ENCODE measurements at regions of chr11 and their contacts with region 1.

Region 1: DNA sequence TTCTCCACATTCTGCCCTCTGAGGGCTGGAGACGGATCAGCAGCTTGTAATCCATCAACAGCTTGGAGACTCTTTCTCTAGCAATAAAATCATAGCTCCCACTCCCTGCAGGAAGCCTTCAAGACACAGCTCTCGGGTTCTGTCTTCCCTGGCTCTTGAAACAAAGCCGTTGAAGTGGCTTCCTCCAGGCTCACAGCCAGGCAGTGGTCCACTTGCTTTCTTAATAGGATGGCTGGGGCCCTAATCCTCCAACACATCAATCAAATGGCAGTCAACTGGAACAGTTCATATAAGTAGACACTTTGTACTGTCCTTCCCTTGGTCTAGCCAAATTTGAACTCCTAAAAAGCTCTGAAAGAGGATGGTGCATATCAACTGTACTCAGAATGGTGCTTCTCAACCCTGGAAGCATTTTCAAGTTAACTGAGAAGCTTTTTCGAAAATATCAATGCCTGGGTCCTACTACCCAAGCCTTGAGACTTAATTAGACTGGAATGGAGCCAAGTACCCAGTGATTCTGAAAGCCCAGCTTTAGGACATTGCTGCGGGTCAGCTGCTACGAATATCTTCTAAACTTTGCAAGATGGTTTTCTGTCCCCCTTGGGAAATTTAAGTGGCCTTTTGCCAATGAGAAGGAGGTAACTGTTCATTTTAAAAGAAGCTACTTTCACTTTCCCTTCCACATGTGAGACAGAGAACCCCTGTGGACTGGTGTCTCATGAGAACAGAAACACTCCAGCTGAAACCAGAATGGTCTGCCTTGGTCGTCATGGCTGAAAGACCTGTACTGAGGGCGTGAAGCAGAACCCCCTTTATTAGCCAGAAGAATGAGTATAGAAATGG is 74.7 kb downstream of the SC5D start:
- DNase-seq: peak; percentile 99
- ATAC-seq: peak; percentile 96
- H3K4me3 ChIP-seq: 0 out of 2 replicates have a peak overlapping the region, but pooled peaks have one; percentile 24
- H3K27ac ChIP-seq: peak overlapping the region; percentile 85
- H3K4me1 ChIP-seq: peaks cover 43% of the 10 kb centered on the region
- H3K27me3 ChIP-seq: no peaks in the 10 kb centered on the region
- CTCF ChIP-seq: no peak
- EP300 ChIP-seq: peak in 1 of 2 experiments; percentile 42; a peak in 1 of 4 replicates
- POLR2A ChIP-seq: no peak
- RAD21 ChIP-seq: no peak

Region 2: GRCh38 chr11:121270001-121270678 is 97.1 kb before region 1 on chr11:
- CTCF ChIA-PET with region 1: no interaction called
- POLR2A ChIA-PET with region 1: no interaction called
- RAD21 ChIA-PET with region 1: no interaction called
- SMC1A ChIA-PET with region 1: no interaction called
- in situ Hi-C with region 1: no loop called
- intact Hi-C with region 1: no loop called
- DNase-seq: no peak
- ATAC-seq: no peak
- H3K4me3 ChIP-seq: no peak overlapping the region
- H3K27ac ChIP-seq: no peak overlapping the region
- H3K4me1 ChIP-seq: no peaks in the 10 kb centered on the region; the same call in 1 of the 2 replicates
- H3K27me3 ChIP-seq: peaks cover 1 to 7% of the 10 kb centered on the region in 2 experiments; a peak in 2 of 4 replicates
- CTCF ChIP-seq: no peak
- EP300 ChIP-seq: no peak
- POLR2A ChIP-seq: no peak
- RAD21 ChIP-seq: no peak

Region 3: GRCh38 chr11:121328967-121329679 is 38.1 kb before region 1 on chr11:
- CTCF ChIA-PET with region 1: interaction called, 10 read pairs
- POLR2A ChIA-PET with region 1: interaction called, 3 read pairs
- RAD21 ChIA-PET with region 1: interaction called, 15 read pairs
- SMC1A ChIA-PET with region 1: interaction called, 338 read pairs
- in situ Hi-C with region 1: no loop called
- intact Hi-C with region 1: loop called (anchors 5 kb)
- DNase-seq: no peak
- ATAC-seq: peak; percentile 68
- H3K4me3 ChIP-seq: no peak overlapping the region
- H3K27ac ChIP-seq: peak overlapping the region; percentile 13; the same call in 1 of the 2 replicates
- H3K4me1 ChIP-seq: peaks cover 18% of the 10 kb centered on the region
- H3K27me3 ChIP-seq: no peaks in the 10 kb centered on the region
- CTCF ChIP-seq: no peak
- EP300 ChIP-seq: no peak
- POLR2A ChIP-seq: no peak
- RAD21 ChIP-seq: no peak

Region 4: GRCh38 chr11:121352251-121352891 is 14.9 kb before region 1 on chr11:
- CTCF ChIA-PET with region 1: interaction called, 4 read pairs
- POLR2A ChIA-PET with region 1: interaction called, 6 read pairs
- RAD21 ChIA-PET with region 1: interaction called, 7 read pairs
- SMC1A ChIA-PET with region 1: interaction called, 338 read pairs
- in situ Hi-C with region 1: no loop called
- intact Hi-C with region 1: no loop called
- DNase-seq: no peak
- ATAC-seq: no peak
- H3K4me3 ChIP-seq: no peak overlapping the region
- H3K27ac ChIP-seq: no peak overlapping the region
- H3K4me1 ChIP-seq: peaks cover 3% of the 10 kb centered on the region
- H3K27me3 ChIP-seq: no peaks in the 10 kb centered on the region; a peak in 1 of 4 replicates
- CTCF ChIP-seq: no peak
- EP300 ChIP-seq: no peak
- POLR2A ChIP-seq: no peak
- RAD21 ChIP-seq: no peak

Region 5: DNA sequence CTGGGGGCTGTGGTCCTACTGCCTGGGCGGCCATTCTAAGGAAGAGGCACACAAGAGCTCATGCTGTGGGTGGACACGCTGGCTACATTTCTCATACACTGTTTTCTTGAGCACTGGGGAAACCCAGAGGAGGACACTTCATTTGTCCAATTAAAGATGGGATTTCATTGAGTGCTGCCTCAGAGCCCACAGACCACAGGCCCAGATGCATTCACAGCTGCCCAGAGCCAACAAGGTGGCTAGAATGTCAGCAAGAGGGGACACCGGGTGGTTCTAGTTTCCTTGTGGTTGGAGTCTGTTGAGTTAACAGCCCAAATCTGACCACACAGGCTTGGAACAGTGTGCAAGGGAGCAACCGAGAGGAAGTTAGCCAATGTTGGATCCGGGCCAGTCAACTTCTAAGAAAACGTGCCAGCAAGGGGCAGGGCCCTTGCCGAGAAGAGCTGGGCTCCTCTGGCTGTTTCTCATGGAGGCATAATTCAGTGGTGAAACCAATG is 49.9 kb after region 1 on chr11:
- CTCF ChIA-PET with region 1: interaction called, 8 read pairs
- POLR2A ChIA-PET with region 1: interaction called, 9 read pairs
- RAD21 ChIA-PET with region 1: interaction called, 16 read pairs
- SMC1A ChIA-PET with region 1: interaction called, 103 read pairs
- in situ Hi-C with region 1: no loop called
- intact Hi-C with region 1: loop called (anchors 5 kb)
- DNase-seq: peak; percentile 92
- ATAC-seq: peak; percentile 87
- H3K4me3 ChIP-seq: no peak overlapping the region
- H3K27ac ChIP-seq: peak overlapping the region; percentile 9; the same call in 1 of the 2 replicates
- H3K4me1 ChIP-seq: peaks cover 45% of the 10 kb centered on the region
- H3K27me3 ChIP-seq: no peaks in the 10 kb centered on the region
- CTCF ChIP-seq: no peak
- EP300 ChIP-seq: peak; percentile 26 to 71; a peak in 2 of 4 replicates
- POLR2A ChIP-seq: no peak
- RAD21 ChIP-seq: no peak

Region 6: GRCh38 chr11:121451986-121452608 is 84.9 kb after region 1 on chr11 and contains the start of gene SORL1:
- CTCF ChIA-PET with region 1: interaction called, 12 read pairs
- POLR2A ChIA-PET with region 1: interaction called, 25 read pairs
- RAD21 ChIA-PET with region 1: interaction called, 42 read pairs
- SMC1A ChIA-PET with region 1: interaction called, 101 read pairs
- in situ Hi-C with region 1: no loop called
- intact Hi-C with region 1: loop called (anchors 2 kb)
- DNase-seq: no peak
- ATAC-seq: peak; percentile 49
- H3K4me3 ChIP-seq: peak within 1 kb of the TSS; percentile 77
- H3K27ac ChIP-seq: peak within 1 kb of the TSS; percentile 76
- H3K4me1 ChIP-seq: peaks cover 49% of the 10 kb centered on the region
- H3K27me3 ChIP-seq: no peaks in the 10 kb centered on the region
- CTCF ChIP-seq: peak; percentile 48 to 73 (median 68)
- EP300 ChIP-seq: no peak
- POLR2A ChIP-seq: peak; percentile 87
- RAD21 ChIP-seq: peak; percentile 62
- polyA plus RNA-seq, gene SORL1: 20.2 to 26.0 TPM

Region 7: DNA sequence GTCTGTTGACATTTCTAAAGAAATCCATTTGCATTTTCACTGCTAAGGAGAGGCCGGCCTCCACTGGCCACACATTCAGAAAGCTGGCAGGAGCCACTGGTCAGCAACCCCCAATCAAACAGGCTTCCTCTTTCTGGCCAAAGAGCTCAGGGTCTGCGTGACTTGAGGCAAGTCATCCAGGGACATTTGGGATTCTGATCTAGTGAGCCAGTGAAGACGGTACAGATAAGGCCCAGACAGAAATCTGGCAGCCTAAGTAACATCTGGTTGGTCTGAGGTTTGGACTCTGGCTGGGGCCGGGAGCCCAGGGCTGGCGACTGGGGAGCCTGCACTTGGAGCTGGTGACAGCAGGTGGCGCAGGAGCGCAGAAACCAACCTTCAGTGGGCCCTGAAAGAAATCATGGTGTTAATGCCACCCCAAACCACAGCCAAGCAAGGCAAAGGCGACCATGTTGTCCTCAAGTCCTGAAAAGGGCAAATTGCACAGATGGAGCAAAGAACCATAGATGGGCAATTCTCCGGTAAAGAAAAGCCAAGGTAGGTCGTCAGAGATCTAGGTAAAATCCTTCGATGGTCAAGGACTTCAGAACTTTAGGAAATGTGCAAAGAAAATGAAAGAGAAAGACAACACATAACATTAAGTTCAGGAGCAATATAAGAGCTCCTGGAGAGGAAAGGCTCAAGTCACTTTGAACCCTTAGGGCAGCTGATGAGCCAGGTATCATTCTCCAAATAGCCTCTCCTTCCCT is 848.2 kb after region 1 on chr11:
- CTCF ChIA-PET with region 1: no interaction called
- POLR2A ChIA-PET with region 1: no interaction called
- RAD21 ChIA-PET with region 1: no interaction called
- SMC1A ChIA-PET with region 1: no interaction called
- in situ Hi-C with region 1: no loop called
- intact Hi-C with region 1: no loop called
- DNase-seq: no peak
- ATAC-seq: peak; percentile 97
- H3K4me3 ChIP-seq: no peak overlapping the region
- H3K27ac ChIP-seq: no peak overlapping the region
- H3K4me1 ChIP-seq: no peaks in the 10 kb centered on the region
- H3K27me3 ChIP-seq: no peaks in the 10 kb centered on the region
- CTCF ChIP-seq: peak; percentile 82 to 94 (median 89)
- EP300 ChIP-seq: no peak
- POLR2A ChIP-seq: no peak
- RAD21 ChIP-seq: peak; percentile 46

Measured in GM12878 (cell line).